ENCODE measurements at regions of chr6 and their contacts with region 1.

Region 1: GRCh38 chr6:18264219-18264922 is at the start of gene DEK:
- DNase-seq: peak in 1 of 2 experiments; percentile 82
- H3K4me3 ChIP-seq: peak within 1 kb of the TSS; percentile 88 to 98 (median 95)
- H3K27ac ChIP-seq: peak within 1 kb of the TSS; percentile 97
- H3K4me1 ChIP-seq: peaks cover 5 to 22% (median 10%) of the 10 kb centered on the region in 4 experiments
- H3K27me3 ChIP-seq: no peaks in the 10 kb centered on the region; a peak in 1 of 7 replicates
- CTCF ChIP-seq: peak; percentile 10 to 41 (median 19); a peak in 3 of 4 replicates
- EP300 ChIP-seq: no peak
- POLR2A ChIP-seq: peak; percentile 20 to 78; a peak in 2 of 3 replicates
- RAD21 ChIP-seq: peak in 1 of 2 experiments; percentile 15; a peak in 1 of 4 replicates
- total RNA-seq, gene DEK: 227 and 228 TPM in 2 replicates

Region 2: DNA sequence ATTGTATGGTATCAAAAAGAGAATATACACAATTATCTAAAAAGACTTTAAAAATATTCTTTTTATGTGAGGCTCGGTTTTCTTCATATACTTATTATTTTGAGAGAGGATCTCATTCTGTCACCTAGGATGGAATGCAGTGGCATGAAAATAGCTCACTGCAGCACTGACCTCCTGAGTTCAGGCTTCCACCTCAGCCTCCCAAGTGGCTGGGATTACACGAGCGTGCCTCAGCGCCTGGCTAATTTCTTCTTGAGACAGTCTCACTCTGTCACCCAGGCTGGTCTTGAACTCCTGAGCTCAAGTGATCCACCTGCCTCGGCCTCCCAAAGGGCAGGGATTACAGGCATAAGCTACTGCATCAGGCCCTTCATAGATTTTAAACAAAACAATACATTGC is 10.7 kb before region 1 on chr6:
- CTCF ChIA-PET with region 1: interaction called, 5 read pairs
- POLR2A ChIA-PET with region 1: interaction called, 11 read pairs
- DNase-seq: no peak
- H3K4me3 ChIP-seq: no peak overlapping the region
- H3K27ac ChIP-seq: no peak overlapping the region
- H3K4me1 ChIP-seq: no peaks in the 10 kb centered on the region
- H3K27me3 ChIP-seq: no peaks in the 10 kb centered on the region
- CTCF ChIP-seq: no peak
- EP300 ChIP-seq: no peak
- POLR2A ChIP-seq: no peak
- RAD21 ChIP-seq: no peak

Region 3: DNA sequence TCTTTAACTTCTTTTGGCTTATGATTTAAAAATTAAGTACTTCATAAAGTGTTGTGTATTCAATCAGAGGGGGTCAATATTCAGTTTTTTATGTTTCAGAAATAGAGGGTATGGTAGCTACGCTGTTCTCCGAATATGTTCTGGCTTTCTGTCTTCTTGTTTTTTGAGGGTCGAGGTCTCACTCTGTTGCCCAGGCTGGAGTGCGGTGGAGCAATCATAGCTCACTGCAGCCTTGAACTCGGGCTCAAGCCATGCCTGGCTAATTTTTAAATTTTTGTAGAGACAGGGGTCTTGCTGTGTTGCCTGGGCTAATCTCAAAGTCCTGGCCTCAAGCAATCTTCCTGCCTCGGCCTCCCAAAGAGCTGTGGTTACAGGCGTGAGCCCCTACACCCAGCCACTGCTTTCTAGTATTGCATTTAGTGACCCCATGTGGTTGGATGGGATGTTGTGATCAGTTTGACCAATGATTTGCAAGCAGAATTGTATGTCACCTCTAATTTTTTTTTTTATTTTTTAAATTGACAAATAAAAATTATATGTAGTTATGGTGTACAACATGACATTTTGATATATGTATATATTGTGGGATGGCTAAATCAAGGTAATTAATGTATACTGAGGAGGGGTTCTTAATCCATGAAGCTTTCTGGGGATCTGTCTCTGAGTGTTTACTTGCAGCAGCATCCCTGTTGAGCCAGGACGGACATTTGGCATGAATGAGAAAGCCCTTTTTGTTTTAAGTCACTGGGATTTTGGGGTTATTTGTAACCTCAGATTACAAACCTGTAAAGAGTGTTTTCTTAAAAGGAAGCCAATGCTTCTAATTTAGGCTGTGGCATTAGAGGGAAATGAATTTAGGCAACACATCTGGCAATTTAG is 38.4 kb after region 1 on chr6:
- CTCF ChIA-PET with region 1: interaction called, 12 read pairs
- POLR2A ChIA-PET with region 1: interaction called, 9 read pairs
- DNase-seq: no peak
- H3K4me3 ChIP-seq: no peak overlapping the region
- H3K27ac ChIP-seq: no peak overlapping the region
- H3K4me1 ChIP-seq: peaks cover 0 to 6% (median 5%) of the 10 kb centered on the region in 4 experiments; a peak in 5 of 7 replicates
- H3K27me3 ChIP-seq: no peaks in the 10 kb centered on the region
- CTCF ChIP-seq: peak in 2 of 3 experiments; percentile 31 to 32; a peak in 2 of 4 replicates
- EP300 ChIP-seq: no peak
- POLR2A ChIP-seq: no peak
- RAD21 ChIP-seq: peak; percentile 41 to 60

Region 4: GRCh38 chr6:18457065-18457812 is 192.9 kb after region 1 on chr6:
- CTCF ChIA-PET with region 1: no interaction called
- POLR2A ChIA-PET with region 1: no interaction called
- DNase-seq: no peak
- H3K4me3 ChIP-seq: no peak overlapping the region
- H3K27ac ChIP-seq: no peak overlapping the region
- H3K4me1 ChIP-seq: peaks cover 0 to 5% (median 3%) of the 10 kb centered on the region in 4 experiments; a peak in 2 of 7 replicates
- H3K27me3 ChIP-seq: no peaks in the 10 kb centered on the region
- CTCF ChIP-seq: no peak
- EP300 ChIP-seq: no peak
- POLR2A ChIP-seq: no peak
- RAD21 ChIP-seq: no peak

Measured in H1 (cell line).